ENCODE measurements at regions of chr12 and their contacts with region 1.

Region 1: GRCh38 chr12:92041742-92042141 is 103.9 kb downstream of the BTG1 start:
- DNase-seq: no peak
- ATAC-seq: peak in 1 of 2 experiments; percentile 51; a peak in 2 of 6 replicates
- H3K4me3 ChIP-seq: no peak overlapping the region
- H3K27ac ChIP-seq: no peak overlapping the region
- H3K4me1 ChIP-seq: peaks cover 6% of the 10 kb centered on the region; the same call in 1 of the 3 replicates
- CTCF ChIP-seq: no peak
- EP300 ChIP-seq: no peak
- POLR2A ChIP-seq: no peak
- RAD21 ChIP-seq: no peak

Region 2: GRCh38 chr12:92030618-92031017 is 11.1 kb before region 1 on chr12:
- CTCF ChIA-PET with region 1: interaction called, 17 read pairs
- POLR2A ChIA-PET with region 1: no interaction called
- DNase-seq: no peak
- ATAC-seq: no peak
- H3K4me3 ChIP-seq: no peak overlapping the region
- H3K27ac ChIP-seq: peak overlapping the region in 1 of 2 experiments; percentile 37; a peak in 1 of 6 replicates
- H3K4me1 ChIP-seq: peaks cover 17% of the 10 kb centered on the region
- CTCF ChIP-seq: no peak
- EP300 ChIP-seq: no peak
- POLR2A ChIP-seq: no peak
- RAD21 ChIP-seq: no peak